Left cardiac atrium (tissue), 4 donors: ENCODE measurements at regions of chr16 and their contacts with region 1.

Region 1: DNA sequence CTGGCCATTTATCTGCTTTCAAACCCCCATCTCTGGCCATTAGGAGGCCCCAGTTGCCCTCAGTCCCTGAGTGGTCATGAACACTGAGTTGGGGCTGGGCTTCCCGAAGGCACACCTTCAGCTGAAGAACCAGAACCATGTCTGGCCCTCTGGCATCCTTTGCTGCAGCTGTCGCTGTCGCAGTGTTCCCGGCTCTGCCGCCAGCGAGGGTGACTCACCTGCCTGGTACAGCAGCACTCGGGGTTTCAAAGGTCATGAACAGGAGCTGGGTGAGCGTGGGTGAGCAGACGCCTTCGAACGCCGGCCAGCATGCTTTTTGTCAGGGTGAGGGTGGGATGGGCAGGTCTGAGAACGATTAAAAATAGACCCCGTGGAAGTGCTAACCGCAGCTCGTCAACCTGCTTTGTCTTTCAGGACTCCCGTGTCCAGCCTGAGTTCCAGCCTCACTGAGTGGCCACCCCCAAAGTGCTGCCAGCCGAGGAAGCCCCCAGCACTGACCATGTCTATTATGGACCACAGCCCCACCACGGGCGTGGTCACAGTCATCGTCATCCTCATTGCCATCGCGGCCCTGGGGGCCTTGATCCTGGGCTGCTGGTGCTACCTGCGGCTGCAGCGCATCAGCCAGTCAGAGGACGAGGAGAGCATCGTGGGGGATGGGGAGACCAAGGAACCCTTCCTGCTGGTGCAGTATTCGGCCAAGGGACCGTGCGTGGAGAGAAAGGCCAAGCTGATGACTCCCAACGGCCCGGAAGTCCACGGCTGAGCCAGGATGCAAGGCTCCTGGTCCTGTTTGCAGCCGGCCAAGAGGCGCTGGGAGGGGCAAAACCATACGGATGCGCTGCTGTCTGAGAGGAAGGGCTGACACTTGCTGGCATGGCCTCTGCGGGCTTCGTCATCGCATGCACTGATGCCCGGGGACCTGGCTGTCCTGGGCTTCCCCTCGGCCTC is 7.6 kb downstream of the SNN start:
- DNase-seq: peak; percentile 51
- ATAC-seq: peak in 1 of 2 donors; percentile 6

Region 2: DNA sequence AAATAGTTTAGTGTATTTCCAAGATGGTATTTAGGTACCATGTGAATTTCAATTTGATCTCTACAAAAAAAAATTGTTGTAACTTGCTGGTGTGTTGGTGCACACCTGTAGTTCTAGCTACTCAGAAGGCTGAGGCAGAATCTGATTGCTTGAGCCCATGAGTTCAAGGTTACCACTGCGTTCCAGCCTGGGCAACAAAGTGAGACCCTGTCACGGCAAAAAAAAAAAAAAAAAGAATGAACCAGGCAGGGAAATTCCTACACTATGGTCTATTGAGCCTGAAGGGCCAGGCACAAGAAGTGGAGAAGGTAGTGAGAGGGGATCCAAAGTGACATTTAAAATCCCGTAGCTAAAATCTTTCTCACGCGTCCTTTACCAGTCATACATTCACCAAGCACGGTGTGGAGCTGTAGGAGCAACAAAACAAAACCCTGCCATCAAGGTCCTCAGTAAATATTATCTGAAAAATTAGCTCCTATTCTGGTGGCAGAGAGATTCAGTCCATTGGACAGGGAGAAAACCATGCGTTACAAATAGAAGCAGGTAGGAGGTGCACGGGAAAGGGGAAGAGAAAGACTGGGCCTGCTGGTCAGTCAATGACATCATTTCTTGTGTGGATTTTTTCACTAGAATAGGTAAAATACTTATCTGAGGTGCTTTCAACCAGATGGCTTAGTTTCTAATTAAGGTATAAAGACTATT is 39.6 kb after region 1 on chr16:
- intact Hi-C with region 1: loop called in 1 of 2 experiments (anchors 5 kb)
- DNase-seq: no peak
- ATAC-seq: no peak